Endothelial cell of umbilical vein (primary cell): ENCODE measurements at regions of chrX and their contacts with region 1.

Region 1: GRCh38 chrX:119516157-119516702 is 48.0 kb downstream of the SLC25A5 start:
- DNase-seq: peak; percentile 67
- H3K4me3 ChIP-seq: no peak overlapping the region
- H3K27ac ChIP-seq: no peak overlapping the region
- H3K4me1 ChIP-seq: no peaks in the 10 kb centered on the region
- H3K27me3 ChIP-seq: no peaks in the 10 kb centered on the region
- CTCF ChIP-seq: peak; percentile 69 to 82
- POLR2A ChIP-seq: no peak

Region 2: GRCh38 chrX:118884552-118885138 is 631.6 kb before region 1 on chrX:
- CTCF ChIA-PET with region 1: no interaction called
- POLR2A ChIA-PET with region 1: no interaction called
- dilution Hi-C with region 1: no loop called
- intact Hi-C with region 1: no loop called
- DNase-seq: no peak
- H3K4me3 ChIP-seq: no peak overlapping the region
- H3K27ac ChIP-seq: no peak overlapping the region
- H3K4me1 ChIP-seq: no peaks in the 10 kb centered on the region
- H3K27me3 ChIP-seq: no peaks in the 10 kb centered on the region
- CTCF ChIP-seq: no peak
- POLR2A ChIP-seq: no peak

Region 3: DNA sequence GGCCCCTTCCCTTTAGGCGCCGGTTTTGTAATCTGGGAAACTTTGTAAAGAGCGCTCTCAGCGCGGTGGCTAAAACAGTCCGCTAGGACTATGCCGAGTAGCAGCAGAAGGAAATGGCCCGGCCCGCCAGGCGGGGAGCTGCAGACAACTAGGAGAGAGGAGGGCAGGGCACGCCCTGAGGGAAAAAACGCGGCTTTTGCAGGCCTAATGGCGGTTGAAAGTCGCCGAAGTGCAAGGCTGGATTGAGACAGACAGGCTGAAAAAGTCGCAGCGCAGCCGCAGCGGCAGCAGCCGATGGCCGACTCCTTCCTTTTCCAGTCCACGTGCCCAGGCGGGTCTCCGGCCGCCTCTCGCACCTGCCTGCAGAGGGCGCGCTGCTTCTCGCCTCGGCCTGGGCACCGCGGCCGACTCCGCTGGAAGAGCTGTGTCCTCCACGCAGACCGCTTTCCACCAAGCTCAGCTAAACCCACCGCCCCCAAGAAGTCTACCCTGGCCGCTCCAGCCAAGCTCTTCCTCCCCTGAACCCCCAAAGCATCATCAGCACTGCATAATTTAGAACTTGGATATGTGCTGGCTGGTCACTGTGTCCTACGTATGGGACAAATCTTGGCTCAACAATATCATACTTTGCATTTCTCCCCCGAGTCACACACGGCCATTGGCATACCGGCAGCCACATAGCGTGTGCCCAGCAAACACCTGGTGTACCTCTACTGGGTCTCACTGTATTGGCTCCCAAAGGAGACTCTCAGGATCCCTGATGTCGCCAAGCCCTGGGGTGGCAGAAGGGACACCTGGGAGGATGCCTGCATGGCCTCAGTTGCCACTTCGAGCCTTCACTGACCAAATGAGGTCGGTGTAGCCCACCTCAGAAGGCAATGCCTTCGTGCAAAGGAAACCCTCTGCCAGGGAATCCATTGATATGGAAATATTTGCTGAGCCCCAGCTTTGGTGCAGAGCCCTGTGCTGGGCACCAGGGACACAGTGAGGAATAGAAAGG is 33.4 kb before region 1 on chrX:
- CTCF ChIA-PET with region 1: interaction called, 217 read pairs
- POLR2A ChIA-PET with region 1: no interaction called
- dilution Hi-C with region 1: no loop called
- intact Hi-C with region 1: no loop called
- DNase-seq: peak; percentile 52
- H3K4me3 ChIP-seq: peak overlapping the region in 2 of 3 experiments; percentile 36 to 37
- H3K27ac ChIP-seq: no peak overlapping the region
- H3K4me1 ChIP-seq: no peaks in the 10 kb centered on the region
- H3K27me3 ChIP-seq: no peaks in the 10 kb centered on the region
- CTCF ChIP-seq: peak; percentile 74 to 83
- POLR2A ChIP-seq: no peak

Region 4: GRCh38 chrX:119502727-119503483 is 13.3 kb before region 1 on chrX:
- CTCF ChIA-PET with region 1: interaction called, 16 read pairs
- POLR2A ChIA-PET with region 1: no interaction called
- dilution Hi-C with region 1: no loop called
- intact Hi-C with region 1: no loop called
- DNase-seq: peak; percentile 1
- H3K4me3 ChIP-seq: no peak overlapping the region
- H3K27ac ChIP-seq: peak overlapping the region; percentile 54
- H3K4me1 ChIP-seq: peaks cover 14% of the 10 kb centered on the region
- H3K27me3 ChIP-seq: no peaks in the 10 kb centered on the region
- CTCF ChIP-seq: no peak
- POLR2A ChIP-seq: no peak

Region 5: DNA sequence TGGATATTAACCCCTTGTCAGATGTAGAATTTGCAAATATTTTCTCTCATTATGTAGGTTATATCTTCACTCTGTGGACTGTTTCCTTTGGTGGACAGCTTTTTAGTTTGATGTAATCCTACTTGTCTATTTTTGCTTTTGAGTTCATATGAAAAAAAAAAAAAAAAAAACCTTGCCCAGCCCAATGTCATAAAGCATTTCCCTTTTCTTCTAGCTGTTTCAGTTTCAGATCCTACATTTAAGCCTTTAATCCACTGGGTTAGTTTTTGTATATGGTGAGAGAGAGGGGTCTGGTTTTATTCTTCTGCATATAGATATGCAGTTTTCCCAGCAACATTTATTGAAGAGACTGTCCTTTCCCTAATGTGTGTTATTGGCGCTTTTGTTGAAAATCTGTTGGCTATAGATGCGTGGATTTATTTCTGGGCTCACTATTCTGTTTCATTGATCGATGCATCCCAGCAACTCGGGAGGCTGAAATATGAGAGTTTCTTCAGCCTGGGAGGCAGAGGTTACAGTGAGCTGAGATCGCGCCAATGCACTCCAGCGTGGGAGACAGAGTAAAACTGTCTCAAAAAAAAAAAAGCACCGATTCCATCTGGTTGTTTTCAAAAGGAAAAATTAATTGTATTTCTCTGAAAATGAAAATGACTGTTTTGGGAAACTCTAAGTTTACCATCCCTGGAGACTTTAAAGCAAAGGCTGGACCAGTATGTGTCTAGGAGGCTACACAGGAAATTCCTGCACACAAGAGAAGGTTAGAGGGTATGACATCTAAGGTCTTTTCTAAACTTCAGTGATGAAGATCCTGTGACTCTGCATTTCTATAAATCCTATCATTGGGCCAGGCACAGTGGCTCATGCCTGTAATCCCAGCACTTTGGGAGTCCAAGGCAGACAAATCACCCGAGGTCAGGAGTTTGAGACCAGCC is 13.4 kb after region 1 on chrX:
- CTCF ChIA-PET with region 1: no interaction called
- POLR2A ChIA-PET with region 1: no interaction called
- dilution Hi-C with region 1: no loop called
- intact Hi-C with region 1: no loop called
- DNase-seq: no peak
- H3K4me3 ChIP-seq: no peak overlapping the region
- H3K27ac ChIP-seq: no peak overlapping the region
- H3K4me1 ChIP-seq: no peaks in the 10 kb centered on the region
- H3K27me3 ChIP-seq: no peaks in the 10 kb centered on the region
- CTCF ChIP-seq: no peak
- POLR2A ChIP-seq: no peak

Region 6: DNA sequence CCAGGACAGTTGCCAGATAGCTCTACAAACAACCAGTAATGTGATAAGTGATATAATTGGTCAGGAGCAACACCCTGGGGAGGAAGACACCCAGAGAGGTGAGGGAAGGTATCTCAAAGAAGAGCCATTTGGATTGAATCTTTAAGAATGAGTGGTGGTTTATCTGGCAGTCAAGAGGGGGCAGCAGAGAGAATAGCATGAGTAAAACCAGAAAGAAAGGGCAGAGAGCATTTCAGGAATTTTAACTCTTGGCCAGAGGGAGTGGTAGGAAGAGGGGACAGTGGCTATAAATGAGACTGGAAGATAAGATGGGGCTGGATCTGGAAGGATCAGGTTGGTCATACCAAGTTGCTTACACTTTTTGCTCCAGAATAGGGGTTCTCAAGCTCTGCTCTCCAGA is 182.6 kb after region 1 on chrX:
- CTCF ChIA-PET with region 1: no interaction called
- POLR2A ChIA-PET with region 1: no interaction called
- dilution Hi-C with region 1: no loop called
- intact Hi-C with region 1: loop called (anchors 1 kb)
- DNase-seq: peak; percentile 47
- H3K4me3 ChIP-seq: no peak overlapping the region
- H3K27ac ChIP-seq: no peak overlapping the region
- H3K4me1 ChIP-seq: no peaks in the 10 kb centered on the region
- H3K27me3 ChIP-seq: no peaks in the 10 kb centered on the region
- CTCF ChIP-seq: peak; percentile 19 to 43
- POLR2A ChIP-seq: no peak

Region 7: GRCh38 chrX:119880552-119881437 is 364.6 kb after region 1 on chrX:
- CTCF ChIA-PET with region 1: no interaction called
- POLR2A ChIA-PET with region 1: no interaction called
- dilution Hi-C with region 1: no loop called
- intact Hi-C with region 1: loop called (anchors 2 kb)
- DNase-seq: peak; percentile 44
- H3K4me3 ChIP-seq: no peak overlapping the region
- H3K27ac ChIP-seq: no peak overlapping the region
- H3K4me1 ChIP-seq: no peaks in the 10 kb centered on the region
- H3K27me3 ChIP-seq: no peaks in the 10 kb centered on the region
- CTCF ChIP-seq: peak; percentile 39 to 59
- POLR2A ChIP-seq: no peak

Region 8: GRCh38 chrX:120457766-120458180 is 941.5 kb after region 1 on chrX:
- CTCF ChIA-PET with region 1: no interaction called
- POLR2A ChIA-PET with region 1: no interaction called
- dilution Hi-C with region 1: no loop called
- intact Hi-C with region 1: no loop called
- DNase-seq: no peak
- H3K4me3 ChIP-seq: no peak overlapping the region
- H3K27ac ChIP-seq: no peak overlapping the region
- H3K4me1 ChIP-seq: peaks cover 12% of the 10 kb centered on the region
- H3K27me3 ChIP-seq: no peaks in the 10 kb centered on the region
- CTCF ChIP-seq: no peak
- POLR2A ChIP-seq: no peak